OCI-LY7 (cell line): ENCODE measurements at regions of chr2 and their contacts with region 1.

Region 1: GRCh38 chr2:159505196-159505595 is 111.2 kb downstream of the BAZ2B start:
- DNase-seq: no peak
- H3K4me3 ChIP-seq: no peak overlapping the region
- H3K27ac ChIP-seq: no peak overlapping the region
- H3K4me1 ChIP-seq: no peaks in the 10 kb centered on the region
- CTCF ChIP-seq: no peak

Region 2: DNA sequence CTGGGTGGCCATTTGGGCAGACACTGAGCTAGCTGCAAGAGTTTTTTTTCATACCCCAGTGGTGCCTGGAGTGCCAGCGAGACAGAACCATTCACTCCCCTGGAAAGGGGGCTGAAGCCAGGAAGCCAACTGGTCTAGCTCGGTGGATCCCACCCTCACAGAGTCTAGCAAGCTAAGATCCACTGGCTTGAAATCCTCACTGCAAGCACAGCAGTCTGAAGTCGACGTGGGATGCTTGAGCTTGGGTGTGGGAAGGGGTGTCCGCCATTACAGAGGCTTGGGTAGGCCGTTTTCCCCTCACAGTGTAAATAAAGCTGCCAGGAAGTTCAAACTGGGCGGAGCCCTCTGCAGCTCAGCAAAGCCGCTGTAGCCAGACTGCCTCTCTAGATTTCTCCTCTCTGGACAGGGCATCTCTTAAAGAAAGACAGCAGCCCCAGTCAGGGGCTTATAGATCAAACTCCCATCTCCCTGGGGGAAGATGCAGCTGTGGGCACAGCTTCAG is 149.1 kb before region 1 on chr2:
- CTCF ChIA-PET with region 1: no interaction called
- POLR2A ChIA-PET with region 1: no interaction called
- intact Hi-C with region 1: no loop called
- DNase-seq: no peak
- H3K4me3 ChIP-seq: no peak overlapping the region
- H3K27ac ChIP-seq: no peak overlapping the region
- H3K4me1 ChIP-seq: no peaks in the 10 kb centered on the region
- CTCF ChIP-seq: no peak

Region 3: DNA sequence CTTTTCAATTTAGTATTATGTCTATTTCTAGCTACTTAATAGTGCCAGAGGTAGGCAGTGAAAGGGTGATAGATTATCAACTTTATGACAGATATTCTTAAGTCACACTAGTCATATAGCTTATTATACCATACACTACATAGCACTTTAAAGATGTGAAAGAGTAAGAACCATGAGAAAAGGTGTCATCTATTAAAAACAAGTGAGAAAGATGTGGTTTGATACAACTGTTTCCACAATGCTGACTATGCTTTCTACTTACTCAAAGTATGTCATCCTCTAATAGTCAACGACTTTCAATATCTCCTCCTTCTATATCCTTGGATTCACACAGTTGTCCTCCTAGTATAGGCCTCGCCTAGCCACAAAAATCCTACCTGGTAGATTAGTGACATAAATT is 85.8 kb before region 1 on chr2:
- CTCF ChIA-PET with region 1: no interaction called
- POLR2A ChIA-PET with region 1: no interaction called
- intact Hi-C with region 1: no loop called
- DNase-seq: no peak
- H3K4me3 ChIP-seq: no peak overlapping the region
- H3K27ac ChIP-seq: no peak overlapping the region
- H3K4me1 ChIP-seq: no peaks in the 10 kb centered on the region
- CTCF ChIP-seq: no peak

Region 4: DNA sequence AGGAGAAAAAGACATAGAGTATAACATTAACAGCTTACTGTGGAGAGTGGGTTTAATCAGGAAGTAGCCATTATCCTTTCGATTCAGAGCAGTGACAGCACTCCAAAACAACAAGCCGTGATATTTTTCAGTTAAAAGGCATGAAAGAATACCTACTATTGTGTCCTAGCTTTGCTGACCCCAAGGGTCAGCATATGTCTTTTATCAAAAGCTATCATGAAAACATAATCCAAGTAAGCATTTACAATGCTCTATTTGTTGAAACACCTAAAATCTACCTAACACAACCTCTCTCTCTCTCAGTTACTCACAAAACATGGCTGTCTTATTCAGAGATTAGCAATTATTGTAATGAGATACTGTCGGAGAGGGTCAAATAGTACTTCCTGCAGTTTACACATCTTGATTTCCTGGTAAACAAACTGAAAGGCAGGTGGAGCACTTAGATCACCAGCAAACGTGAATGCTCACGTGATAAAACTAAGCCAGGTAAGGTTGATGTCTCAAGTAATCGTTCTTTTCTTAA is 11.1 kb after region 1 on chr2:
- CTCF ChIA-PET with region 1: no interaction called
- POLR2A ChIA-PET with region 1: interaction called, 12 read pairs
- intact Hi-C with region 1: no loop called
- DNase-seq: peak; percentile 52
- H3K4me3 ChIP-seq: peak overlapping the region; percentile 64
- H3K27ac ChIP-seq: no peak overlapping the region
- H3K4me1 ChIP-seq: peaks cover 6% of the 10 kb centered on the region
- CTCF ChIP-seq: 0 out of 2 replicates have a peak, but pooled peaks have one; percentile 26

Region 5: DNA sequence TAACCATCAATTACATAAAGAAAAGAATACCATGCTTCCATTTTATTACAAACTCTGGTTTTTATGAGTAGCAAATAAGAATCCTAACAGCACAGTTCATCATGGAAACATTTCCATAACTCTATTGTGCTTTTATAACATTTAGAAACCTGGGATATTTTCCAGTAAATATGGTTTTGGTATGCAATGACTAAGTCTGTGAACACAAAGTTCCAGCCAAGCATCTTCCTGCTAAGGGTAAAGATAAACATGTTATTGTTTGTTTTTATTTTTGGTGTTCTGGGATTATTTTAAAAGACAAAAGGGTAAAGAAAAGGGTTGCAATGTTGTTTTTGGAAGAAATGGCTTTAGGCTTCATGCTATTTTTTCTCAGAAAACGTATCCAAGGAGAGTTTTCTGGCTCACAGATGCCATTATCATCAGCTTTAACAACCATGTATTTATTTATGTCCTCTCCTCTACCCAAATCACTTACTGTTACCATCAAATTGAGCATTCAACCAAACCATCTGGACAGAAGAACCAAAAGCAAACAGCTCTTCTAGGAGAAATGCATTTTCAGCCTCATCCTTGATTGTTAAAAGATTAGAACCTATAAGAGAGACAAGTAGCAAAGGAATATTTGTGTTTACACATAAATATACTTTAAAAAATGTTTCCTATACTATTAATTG is 441.3 kb after region 1 on chr2:
- CTCF ChIA-PET with region 1: no interaction called
- POLR2A ChIA-PET with region 1: no interaction called
- intact Hi-C with region 1: no loop called
- DNase-seq: no peak
- H3K4me3 ChIP-seq: no peak overlapping the region
- H3K27ac ChIP-seq: no peak overlapping the region
- H3K4me1 ChIP-seq: no peaks in the 10 kb centered on the region
- CTCF ChIP-seq: no peak